Heart left ventricle (tissue), 16 donors: ENCODE measurements at regions of chr6 and their contacts with region 1.

Region 1: GRCh38 chr6:49849213-49849907 is 17.0 kb downstream of the CRISP1 start:
- DNase-seq: no peak
- ATAC-seq: peak in 1 of 4 donors; percentile 54
- H3K4me3 ChIP-seq: no peak overlapping the region
- H3K27ac ChIP-seq: no peak overlapping the region
- H3K4me1 ChIP-seq: no peaks in the 10 kb centered on the region
- H3K27me3 ChIP-seq: peaks cover 0 to 16% (median 0%) of the 10 kb centered on the region in 9 donors
- CTCF ChIP-seq: peak; percentile 55 to 78 (median 64)
- POLR2A ChIP-seq: no peak

Region 2: DNA sequence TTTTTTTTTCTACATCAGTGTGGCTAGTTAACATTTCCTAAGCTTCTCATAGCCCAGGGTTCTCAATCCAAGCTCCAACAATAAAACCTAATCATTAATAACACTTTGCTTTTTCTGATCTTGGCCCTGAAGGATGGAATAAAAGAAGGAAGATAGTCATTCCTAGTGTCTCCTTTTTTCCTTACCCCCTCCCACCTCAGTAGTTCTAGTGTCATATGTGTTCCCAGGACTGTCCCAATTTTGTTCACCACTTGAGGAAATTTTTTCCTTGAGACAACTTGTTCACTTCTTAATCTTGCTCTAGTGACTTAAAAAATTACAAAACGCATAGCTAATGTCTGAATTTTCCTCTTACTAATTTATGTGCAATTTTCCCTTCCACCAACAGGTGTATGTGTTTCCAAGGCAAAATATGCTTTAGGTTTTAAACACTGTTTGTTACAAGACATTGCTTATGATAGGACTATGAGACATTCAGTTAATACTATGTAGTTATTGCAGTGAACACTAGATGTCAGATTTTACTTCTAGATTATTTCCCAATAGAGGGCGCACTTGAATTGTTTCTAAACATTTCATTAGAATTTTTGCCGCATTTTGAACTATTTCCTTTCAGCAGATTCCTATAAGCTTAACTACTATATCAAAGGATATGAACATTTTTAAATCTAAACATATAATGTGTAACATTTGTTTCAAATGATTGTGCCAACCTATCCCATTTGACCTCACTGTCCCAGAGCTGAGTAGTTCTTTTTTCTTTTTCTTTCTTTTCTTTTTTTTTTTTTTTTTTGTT is 317.4 kb before region 1 on chr6:
- intact Hi-C with region 1: loop called in 9 of 10 experiments (anchors 2 to 10 kb)
- DNase-seq: no peak
- ATAC-seq: peak in 2 of 4 donors; percentile 62 to 67
- H3K4me3 ChIP-seq: peak overlapping the region in 5 of 12 donors; percentile 13 to 29 (median 26)
- H3K27ac ChIP-seq: no peak overlapping the region
- H3K4me1 ChIP-seq: no peaks in the 10 kb centered on the region
- H3K27me3 ChIP-seq: peaks cover 0 to 3% (median 0%) of the 10 kb centered on the region in 9 donors
- CTCF ChIP-seq: peak; percentile 56 to 90 (median 76)
- POLR2A ChIP-seq: no peak

Region 3: GRCh38 chr6:49618257-49618656 is 231.1 kb before region 1 on chr6:
- intact Hi-C with region 1: loop called in 6 of 10 experiments (anchors 5 to 10 kb)
- DNase-seq: no peak
- ATAC-seq: no peak
- H3K4me3 ChIP-seq: no peak overlapping the region
- H3K27ac ChIP-seq: no peak overlapping the region
- H3K4me1 ChIP-seq: no peaks in the 10 kb centered on the region
- H3K27me3 ChIP-seq: no peaks in the 10 kb centered on the region
- CTCF ChIP-seq: no peak
- POLR2A ChIP-seq: no peak

Region 4: GRCh38 chr6:49625140-49625539 is 224.2 kb before region 1 on chr6:
- intact Hi-C with region 1: loop called in 7 of 10 experiments (anchors 2 to 10 kb)
- DNase-seq: no peak
- ATAC-seq: no peak
- H3K4me3 ChIP-seq: no peak overlapping the region
- H3K27ac ChIP-seq: no peak overlapping the region
- H3K4me1 ChIP-seq: no peaks in the 10 kb centered on the region
- H3K27me3 ChIP-seq: no peaks in the 10 kb centered on the region
- CTCF ChIP-seq: no peak
- POLR2A ChIP-seq: no peak

Region 5: GRCh38 chr6:49636713-49637349 is 212.5 kb before region 1 on chr6 and contains the start of gene RHAG:
- intact Hi-C with region 1: loop called in 1 of 10 experiments (anchors 10 kb)
- DNase-seq: no peak
- ATAC-seq: no peak
- H3K4me3 ChIP-seq: no peak within 1 kb of the TSS
- H3K27ac ChIP-seq: no peak within 1 kb of the TSS
- H3K4me1 ChIP-seq: no peaks in the 10 kb centered on the region
- H3K27me3 ChIP-seq: no peaks in the 10 kb centered on the region
- CTCF ChIP-seq: no peak
- POLR2A ChIP-seq: no peak
- total RNA-seq, gene RHAG: 0.16 to 2.6 (median 0.44) TPM in 5 of 9 donors, not detected in the others